ENCODE measurements at regions of chr2 and their contacts with region 1.

Region 1: DNA sequence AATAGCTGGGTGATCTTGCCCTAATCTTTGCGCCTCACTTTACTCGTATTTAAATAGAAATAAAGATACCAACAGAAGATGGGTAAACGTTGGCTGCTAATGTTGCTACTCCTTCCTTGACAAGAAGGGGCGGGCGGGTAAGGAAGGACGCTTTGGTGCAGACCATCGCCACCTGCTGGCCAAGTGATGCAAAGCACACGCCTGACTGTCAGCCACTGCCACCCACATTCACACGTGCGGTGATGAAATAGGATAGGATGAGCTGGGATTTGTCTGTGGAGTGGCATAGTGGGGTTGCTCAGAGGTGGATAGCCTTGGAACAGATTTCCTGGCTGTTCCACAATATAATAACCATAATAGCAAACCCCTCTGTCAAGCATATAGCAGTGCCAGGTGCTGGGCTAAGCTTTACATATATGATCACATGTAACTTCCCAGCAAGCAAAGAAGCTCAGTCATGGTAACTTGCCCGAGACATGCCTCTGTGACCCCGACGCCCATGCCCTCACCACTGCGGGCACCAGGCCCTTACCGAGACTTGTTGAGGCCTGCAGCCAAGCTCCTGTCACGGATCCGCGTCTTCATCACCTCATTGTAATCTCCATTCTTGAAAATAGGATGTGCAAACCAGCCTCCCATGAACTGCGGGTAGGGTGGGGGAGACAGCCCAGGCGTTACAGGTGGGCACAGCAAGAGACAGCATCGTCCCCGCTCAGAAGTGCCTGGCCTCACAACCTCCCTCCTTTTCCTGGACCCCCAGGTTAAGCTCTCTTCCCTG is 39.3 kb downstream of the LCT start:
- DNase-seq: peak; percentile 86
- CTCF ChIP-seq: peak; percentile 99

Region 2: GRCh38 chr2:134988994-134989605 is 808.6 kb before region 1 on chr2:
- CTCF ChIA-PET with region 1: interaction called, 13 read pairs
- POLR2A ChIA-PET with region 1: no interaction called
- DNase-seq: peak; percentile 34
- CTCF ChIP-seq: peak; percentile 49

Region 3: GRCh38 chr2:135762022-135762421 is 35.7 kb before region 1 on chr2:
- CTCF ChIA-PET with region 1: interaction called, 16 read pairs
- POLR2A ChIA-PET with region 1: no interaction called
- DNase-seq: no peak
- CTCF ChIP-seq: no peak

Region 4: DNA sequence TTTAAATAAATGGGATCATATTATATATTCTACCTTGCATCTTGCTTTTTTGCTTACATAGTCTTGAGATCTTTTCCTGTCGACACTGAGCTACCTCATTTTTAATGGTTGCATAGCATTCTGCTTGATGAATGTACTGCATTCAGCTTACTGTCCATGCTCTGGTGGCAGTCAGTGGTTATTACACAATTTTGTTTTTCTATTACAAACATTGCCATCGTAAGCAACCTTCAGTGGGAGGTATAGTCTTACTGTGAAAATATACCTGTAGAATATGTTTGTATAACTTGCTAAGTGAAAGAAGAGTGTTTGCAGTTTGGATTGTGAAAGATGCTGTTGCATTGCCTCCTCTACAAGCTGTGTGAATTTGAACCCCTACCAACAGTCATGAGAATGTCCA is 12.7 kb before region 1 on chr2:
- CTCF ChIA-PET with region 1: interaction called, 110 read pairs
- POLR2A ChIA-PET with region 1: no interaction called
- DNase-seq: no peak
- CTCF ChIP-seq: no peak

Region 5: DNA sequence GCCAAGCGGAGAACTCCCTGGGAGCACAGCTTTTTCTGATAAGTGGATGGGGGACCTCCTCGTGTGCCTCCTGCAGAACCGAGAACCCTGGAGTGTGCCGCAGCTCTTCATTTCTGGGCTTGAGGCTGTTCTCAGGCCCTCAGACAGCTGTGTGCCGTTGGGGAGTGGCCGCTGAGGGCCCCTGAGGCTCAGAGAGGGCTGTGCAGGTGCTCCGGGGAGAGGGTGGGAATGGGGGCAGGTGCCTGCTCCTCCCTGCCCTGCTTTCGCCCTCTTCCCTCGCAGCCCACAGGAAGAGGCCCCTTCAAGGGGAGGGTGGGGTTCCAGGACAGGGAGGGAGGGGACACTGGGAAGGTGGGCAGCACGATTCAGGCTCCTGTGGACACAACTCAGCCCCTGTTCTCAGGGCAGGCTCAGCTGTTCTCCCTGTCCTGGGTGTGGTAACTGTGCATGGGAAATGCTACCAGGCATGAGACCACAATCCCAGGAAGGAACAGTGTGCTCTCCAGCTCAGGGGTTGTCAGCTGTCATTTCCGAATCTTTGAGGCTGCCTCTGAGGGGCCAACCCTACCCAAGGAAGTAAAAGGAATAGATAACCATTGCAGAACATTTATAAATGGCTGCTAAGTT is 28.0 kb after region 1 on chr2:
- CTCF ChIA-PET with region 1: interaction called, 187 read pairs
- POLR2A ChIA-PET with region 1: no interaction called
- DNase-seq: no peak
- CTCF ChIP-seq: no peak

Region 6: DNA sequence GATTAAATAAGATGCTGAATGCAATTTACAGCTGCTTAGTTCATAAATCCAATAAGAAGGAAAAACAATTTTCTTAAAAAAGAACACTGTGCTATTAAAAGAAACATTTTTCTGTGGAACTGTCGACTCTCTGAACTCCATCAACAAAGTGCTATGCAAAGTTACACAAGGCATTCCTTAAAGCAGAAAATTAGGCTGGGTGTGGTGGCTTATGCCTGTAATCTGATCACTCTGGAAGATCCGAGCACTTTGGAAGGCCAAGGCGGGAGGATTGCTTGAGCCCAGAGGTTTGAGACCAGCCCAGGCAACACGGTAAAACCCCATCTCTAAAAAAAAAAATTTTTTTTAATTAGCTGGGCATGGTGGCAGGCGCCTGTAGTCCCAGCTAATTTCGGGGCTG is 65.5 kb after region 1 on chr2:
- CTCF ChIA-PET with region 1: interaction called, 11 read pairs
- POLR2A ChIA-PET with region 1: no interaction called
- DNase-seq: no peak
- CTCF ChIP-seq: no peak

Region 7: GRCh38 chr2:136008205-136008865 is 210.6 kb after region 1 on chr2:
- CTCF ChIA-PET with region 1: no interaction called
- POLR2A ChIA-PET with region 1: no interaction called
- DNase-seq: no peak
- CTCF ChIP-seq: no peak